Naive thymus-derived CD8-positive, alpha-beta T cell (primary cell): ENCODE measurements at regions of chr19 and their contacts with region 1.

Region 1: DNA sequence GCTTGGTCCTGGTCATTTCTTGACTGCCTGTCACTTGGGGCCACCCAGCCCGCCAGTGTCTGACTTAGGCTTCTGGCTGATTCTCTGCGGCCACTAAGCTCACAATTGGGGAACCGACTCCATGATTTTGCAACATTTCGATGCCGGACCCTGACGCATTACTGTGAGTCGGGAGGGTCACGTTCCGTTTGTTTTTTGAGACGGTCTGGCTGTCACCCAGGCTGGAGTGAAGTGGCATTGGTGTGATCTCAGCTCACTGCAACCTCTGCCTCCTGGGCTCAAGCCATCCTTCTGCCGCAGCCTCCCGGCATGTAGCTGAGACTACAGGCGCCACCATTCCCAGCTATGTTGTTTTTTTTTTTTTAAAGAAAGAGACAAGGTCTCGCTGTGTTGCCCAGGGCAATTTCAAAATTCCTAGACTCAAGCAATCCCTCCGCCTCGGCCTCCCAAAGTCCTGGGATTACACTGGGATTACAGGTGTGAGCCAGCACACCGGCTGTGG is 3.2 kb upstream of the ADAT3 start:
- DNase-seq: no peak
- ATAC-seq: no peak
- H3K4me3 Mint-ChIP-seq: peak overlapping the region in 1 of 10 donors; percentile 7
- H3K27ac Mint-ChIP-seq: peak overlapping the region in 1 of 10 donors; percentile 74
- H3K4me1 Mint-ChIP-seq: peaks cover 7 to 52% (median 33%) of the 10 kb centered on the region in 4 donors
- H3K27me3 Mint-ChIP-seq: no peaks in the 10 kb centered on the region

Region 2: GRCh38 chr19:1929021-1929742 is 27.2 kb after region 1 on chr19:
- POLR2A ChIA-PET with region 1: interaction called, 16 read pairs
- DNase-seq: peak; percentile 68 to 87 (median 80)
- ATAC-seq: peak; percentile 89
- H3K4me3 Mint-ChIP-seq: peak overlapping the region; percentile 75 to 88 (median 82)
- H3K27ac Mint-ChIP-seq: peak overlapping the region in 8 of 10 donors; percentile 53 to 93 (median 85)
- H3K4me1 Mint-ChIP-seq: peaks cover 7 to 36% (median 25%) of the 10 kb centered on the region in 4 donors
- H3K27me3 Mint-ChIP-seq: no peaks in the 10 kb centered on the region